ENCODE measurements at regions of chr17 and their contacts with region 1.

Region 1: DNA sequence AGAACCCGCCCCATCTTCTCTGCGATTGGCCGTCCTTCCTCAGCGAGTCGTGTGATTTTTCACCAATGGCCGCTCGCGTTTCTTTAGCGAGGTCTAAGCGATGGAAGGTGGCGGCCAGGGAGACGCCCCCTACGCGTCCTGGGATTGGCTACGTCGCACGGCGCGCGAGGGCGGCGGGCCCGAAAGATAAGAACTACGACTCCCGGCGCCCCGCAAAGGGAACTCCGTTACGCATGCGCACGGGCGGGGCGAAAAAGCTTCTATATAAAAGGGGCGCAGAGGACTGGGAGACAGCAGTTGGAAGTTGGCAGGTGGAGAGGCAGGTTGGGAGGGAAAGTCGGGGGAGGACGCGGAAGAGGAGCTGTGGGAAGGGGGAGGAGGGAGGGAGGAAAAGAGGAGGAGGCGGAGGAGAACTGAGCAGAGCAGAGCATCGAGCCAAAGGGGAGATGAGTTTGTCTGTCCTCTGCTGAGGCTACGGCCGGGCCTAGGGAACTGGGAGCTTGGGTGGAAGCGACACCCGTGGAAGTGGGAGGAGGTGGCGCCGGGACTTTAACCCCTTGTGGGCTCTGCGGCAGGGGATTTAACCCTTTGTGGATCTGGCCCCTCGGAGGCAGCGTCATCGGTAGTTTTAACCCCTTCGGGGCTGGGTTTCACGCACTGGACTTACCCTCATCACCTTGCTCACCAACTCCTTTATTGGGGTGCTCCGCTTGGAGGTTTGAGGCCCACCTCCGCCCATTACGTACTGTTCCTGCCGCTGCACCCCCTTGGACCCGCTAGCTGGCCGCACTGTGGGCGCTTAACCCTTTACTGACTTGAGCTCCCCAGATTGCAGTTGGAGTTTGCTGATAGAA is at the start of gene HEXIM1:
- DNase-seq: peak; percentile 94
- H3K4me3 ChIP-seq: peak within 1 kb of the TSS; percentile 85 to 99
- H3K27ac ChIP-seq: peak within 1 kb of the TSS; percentile 99 to 100
- H3K4me1 ChIP-seq: peaks cover 17 to 25% of the 10 kb centered on the region in 2 experiments; a peak in 3 of 4 replicates
- H3K27me3 ChIP-seq: no peaks in the 10 kb centered on the region
- CTCF ChIP-seq: no peak
- EP300 ChIP-seq: no peak; a peak in 1 of 4 replicates
- RAD21 ChIP-seq: no peak
- polyA plus RNA-seq, gene HEXIM1: 16.1 and 20.7 TPM in 2 replicates

Region 2: DNA sequence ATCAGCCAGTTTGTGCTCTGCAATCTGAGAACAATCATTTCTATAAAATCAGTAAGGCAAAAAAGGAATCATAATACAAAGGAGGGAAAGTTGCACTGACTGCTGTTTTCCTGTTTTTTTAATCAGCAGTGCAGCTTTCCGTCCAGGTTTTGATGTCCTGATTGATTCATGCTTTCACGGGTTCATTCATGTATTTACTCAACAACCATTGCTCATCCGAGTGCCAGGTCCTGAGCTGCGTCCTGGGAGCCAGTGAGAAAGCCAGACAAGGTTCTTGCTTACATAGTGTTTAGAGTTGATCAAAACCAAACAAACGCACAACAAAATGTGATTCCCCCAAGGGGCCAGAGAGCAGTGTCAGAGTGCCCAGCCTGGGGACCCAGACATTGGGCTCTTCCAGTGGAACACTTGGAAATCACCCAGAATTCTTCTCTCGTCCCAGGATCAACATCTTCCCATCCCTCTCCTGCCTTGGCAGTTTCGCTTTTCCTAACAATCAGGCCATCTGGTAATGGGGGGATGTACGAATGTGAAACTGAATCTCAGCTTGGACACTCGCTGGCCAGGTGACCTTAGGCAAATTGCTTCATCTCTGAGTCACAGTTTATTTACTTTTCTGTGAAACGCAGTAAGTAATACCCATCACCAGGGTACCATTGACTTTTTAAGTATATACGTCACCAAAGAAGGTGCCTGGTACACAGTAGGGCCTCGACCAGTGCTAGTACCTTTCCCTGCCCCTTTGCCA is 167.0 kb before region 1 on chr17:
- CTCF ChIA-PET with region 1: no interaction called
- POLR2A ChIA-PET with region 1: no interaction called
- DNase-seq: no peak
- H3K4me3 ChIP-seq: no peak overlapping the region
- H3K27ac ChIP-seq: no peak overlapping the region
- H3K4me1 ChIP-seq: peaks cover 0 to 18% of the 10 kb centered on the region in 2 experiments; a peak in 1 of 4 replicates
- H3K27me3 ChIP-seq: no peaks in the 10 kb centered on the region
- CTCF ChIP-seq: no peak
- EP300 ChIP-seq: no peak
- RAD21 ChIP-seq: no peak

Region 3: GRCh38 chr17:44997733-44998520 is 150.5 kb before region 1 on chr17:
- CTCF ChIA-PET with region 1: no interaction called
- POLR2A ChIA-PET with region 1: no interaction called
- DNase-seq: no peak
- H3K4me3 ChIP-seq: no peak overlapping the region
- H3K27ac ChIP-seq: no peak overlapping the region
- H3K4me1 ChIP-seq: no peaks in the 10 kb centered on the region; a peak in 1 of 4 replicates
- H3K27me3 ChIP-seq: no peaks in the 10 kb centered on the region
- CTCF ChIP-seq: no peak
- EP300 ChIP-seq: no peak
- RAD21 ChIP-seq: no peak

Region 4: DNA sequence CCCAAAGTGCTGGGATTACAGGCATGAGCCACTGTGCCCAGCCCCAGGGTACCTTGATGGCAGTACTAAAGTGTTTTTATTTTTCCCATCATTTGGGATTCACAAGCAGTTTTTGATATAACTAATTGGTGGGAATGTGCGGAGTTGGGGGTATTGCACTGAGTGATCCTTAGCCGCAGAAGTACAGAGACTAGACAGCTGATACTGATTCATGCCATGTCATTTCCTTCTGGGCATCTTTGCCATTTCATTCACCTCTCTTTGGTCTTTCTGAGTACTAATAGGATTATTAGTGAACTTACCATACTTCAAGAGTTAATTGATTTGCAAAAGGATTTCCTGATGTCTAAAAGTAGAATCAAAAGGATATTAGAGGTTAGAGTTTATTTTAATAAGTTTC is 77.6 kb before region 1 on chr17:
- CTCF ChIA-PET with region 1: no interaction called
- POLR2A ChIA-PET with region 1: no interaction called
- DNase-seq: no peak
- H3K4me3 ChIP-seq: no peak overlapping the region
- H3K27ac ChIP-seq: peak overlapping the region in 1 of 2 experiments; percentile 33; a peak in 1 of 4 replicates
- H3K4me1 ChIP-seq: peaks cover 2 to 3% of the 10 kb centered on the region in 2 experiments; a peak in 2 of 4 replicates
- H3K27me3 ChIP-seq: no peaks in the 10 kb centered on the region
- CTCF ChIP-seq: no peak
- EP300 ChIP-seq: no peak
- RAD21 ChIP-seq: no peak

Region 5: DNA sequence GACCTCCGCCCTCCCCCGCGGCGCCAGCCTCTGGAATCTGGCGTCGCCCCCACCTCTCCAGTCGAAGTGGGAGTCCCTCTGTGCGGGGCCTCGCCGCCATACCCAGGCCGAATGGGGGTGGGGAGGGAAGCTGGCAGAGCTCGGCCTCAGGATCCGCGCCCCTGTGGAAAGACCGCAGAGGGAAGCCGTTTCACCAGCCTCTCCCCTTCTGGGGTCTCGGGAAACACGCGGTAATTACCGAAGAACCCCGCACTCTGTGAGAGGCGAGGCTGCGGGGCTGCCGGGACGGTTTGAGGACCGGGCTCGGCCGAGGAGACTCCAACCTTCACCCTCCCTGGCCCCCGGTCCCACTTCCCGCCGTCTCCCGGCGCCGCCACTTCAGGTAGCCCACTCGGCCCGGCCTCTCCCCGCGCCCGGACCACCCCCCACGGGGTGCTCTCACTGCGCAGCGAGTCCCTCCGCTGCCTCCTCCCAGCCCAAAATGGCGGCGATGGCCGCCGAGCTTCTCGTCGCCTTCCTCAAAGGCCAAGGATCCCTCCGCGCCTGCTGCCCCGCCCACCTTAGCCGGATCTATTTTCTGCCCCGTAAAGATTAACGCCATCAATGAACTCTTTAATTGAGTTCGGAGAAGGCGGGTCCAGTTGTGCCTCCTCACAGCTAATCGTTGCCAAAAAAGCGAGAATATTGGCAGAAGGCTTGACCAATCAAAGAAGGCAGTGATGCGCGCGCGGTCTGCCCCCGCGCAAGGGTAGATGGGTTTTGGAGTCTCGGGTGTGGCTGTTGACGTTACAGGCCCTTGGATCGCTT is 12.8 kb after region 1 on chr17:
- CTCF ChIA-PET with region 1: interaction called, 114 read pairs
- POLR2A ChIA-PET with region 1: interaction called, 210 read pairs
- DNase-seq: peak; percentile 96
- H3K4me3 ChIP-seq: peak overlapping the region; percentile 74 to 91
- H3K27ac ChIP-seq: peak overlapping the region; percentile 90 to 94
- H3K4me1 ChIP-seq: peaks cover 6 to 18% of the 10 kb centered on the region in 2 experiments; a peak in 2 of 4 replicates
- H3K27me3 ChIP-seq: no peaks in the 10 kb centered on the region
- CTCF ChIP-seq: peak; percentile 34
- EP300 ChIP-seq: peak in 1 of 2 experiments; percentile 55; a peak in 1 of 4 replicates
- RAD21 ChIP-seq: no peak

Region 6: GRCh38 chr17:45172454-45173286 is 24.3 kb after region 1 on chr17:
- CTCF ChIA-PET with region 1: interaction called, 54 read pairs
- POLR2A ChIA-PET with region 1: interaction called, 44 read pairs
- DNase-seq: peak; percentile 93
- H3K4me3 ChIP-seq: peak overlapping the region; percentile 25 to 30; a peak in 3 of 4 replicates
- H3K27ac ChIP-seq: peak overlapping the region; percentile 89 to 94
- H3K4me1 ChIP-seq: peaks cover 29 to 40% of the 10 kb centered on the region in 2 experiments; a peak in 3 of 4 replicates
- H3K27me3 ChIP-seq: no peaks in the 10 kb centered on the region
- CTCF ChIP-seq: peak; percentile 28; the same call in 1 of the 2 replicates
- EP300 ChIP-seq: peak; percentile 34 to 66; a peak in 2 of 4 replicates
- RAD21 ChIP-seq: peak; percentile 6; the same call in 1 of the 2 replicates

Region 7: DNA sequence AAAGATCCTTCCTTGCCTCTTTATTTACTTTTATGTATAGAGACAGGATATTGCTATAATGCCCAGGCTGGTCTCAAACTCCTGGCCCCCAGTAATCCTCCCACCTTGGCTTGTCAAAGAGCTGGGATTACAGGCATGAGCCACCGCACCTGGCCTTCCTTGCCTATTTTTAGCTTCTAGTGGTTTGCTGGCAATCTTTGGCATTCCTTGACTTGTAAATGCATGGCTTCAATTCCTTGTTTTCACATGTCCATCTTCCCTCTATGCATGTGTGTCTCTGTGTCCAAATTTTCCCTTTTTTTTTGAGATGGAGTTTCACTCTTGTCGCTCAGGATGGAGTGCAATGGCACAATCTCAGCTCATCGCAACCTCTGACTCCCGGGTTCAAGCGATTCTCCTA is 35.7 kb after region 1 on chr17:
- CTCF ChIA-PET with region 1: interaction called, 11 read pairs
- POLR2A ChIA-PET with region 1: interaction called, 4 read pairs
- DNase-seq: no peak
- H3K4me3 ChIP-seq: no peak overlapping the region
- H3K27ac ChIP-seq: no peak overlapping the region
- H3K4me1 ChIP-seq: no peaks in the 10 kb centered on the region
- H3K27me3 ChIP-seq: no peaks in the 10 kb centered on the region
- CTCF ChIP-seq: no peak
- EP300 ChIP-seq: no peak
- RAD21 ChIP-seq: no peak